ENCODE measurements at regions of chr18 and their contacts with region 1.

Region 1: DNA sequence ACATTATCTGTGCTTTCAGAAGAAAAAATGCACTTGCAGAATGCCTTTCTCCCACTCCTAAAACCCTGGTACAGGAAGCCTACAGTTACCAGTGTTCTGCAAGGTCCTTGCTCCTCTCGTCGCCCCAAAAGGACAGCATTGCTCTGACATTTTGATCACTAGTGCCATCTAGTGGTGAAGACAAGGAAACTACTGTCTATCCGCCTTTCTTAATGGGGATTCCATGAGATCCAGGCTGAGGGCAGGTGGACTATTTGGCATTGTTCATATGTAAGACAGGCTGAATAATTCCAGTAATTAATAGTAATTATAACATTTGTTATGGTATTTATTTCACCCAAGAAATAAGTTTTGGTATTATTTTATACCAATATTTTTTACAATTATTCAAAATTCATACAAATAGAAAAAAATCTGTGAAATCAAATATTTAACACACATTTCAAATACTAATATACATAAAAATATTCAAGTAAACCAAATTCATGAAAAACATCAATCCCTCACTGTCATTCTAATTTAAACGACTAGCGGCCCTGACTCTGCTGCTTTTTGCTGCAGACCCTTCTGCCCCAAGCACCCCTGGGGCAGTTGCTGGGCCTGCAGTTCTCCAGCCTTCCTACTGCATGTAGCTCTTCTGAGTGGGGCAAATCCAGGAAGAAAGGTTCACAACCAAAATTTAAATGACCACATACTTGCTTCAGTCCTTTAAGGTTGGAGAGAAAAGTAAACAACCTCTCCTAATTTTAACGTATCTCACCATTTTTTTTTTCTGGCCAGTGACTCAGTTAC is 19.0 kb downstream of the TPGS2 start:
- DNase-seq: no peak
- H3K4me3 ChIP-seq: no peak overlapping the region
- H3K27me3 ChIP-seq: no peaks in the 10 kb centered on the region
- CTCF ChIP-seq: peak; percentile 81

Region 2: DNA sequence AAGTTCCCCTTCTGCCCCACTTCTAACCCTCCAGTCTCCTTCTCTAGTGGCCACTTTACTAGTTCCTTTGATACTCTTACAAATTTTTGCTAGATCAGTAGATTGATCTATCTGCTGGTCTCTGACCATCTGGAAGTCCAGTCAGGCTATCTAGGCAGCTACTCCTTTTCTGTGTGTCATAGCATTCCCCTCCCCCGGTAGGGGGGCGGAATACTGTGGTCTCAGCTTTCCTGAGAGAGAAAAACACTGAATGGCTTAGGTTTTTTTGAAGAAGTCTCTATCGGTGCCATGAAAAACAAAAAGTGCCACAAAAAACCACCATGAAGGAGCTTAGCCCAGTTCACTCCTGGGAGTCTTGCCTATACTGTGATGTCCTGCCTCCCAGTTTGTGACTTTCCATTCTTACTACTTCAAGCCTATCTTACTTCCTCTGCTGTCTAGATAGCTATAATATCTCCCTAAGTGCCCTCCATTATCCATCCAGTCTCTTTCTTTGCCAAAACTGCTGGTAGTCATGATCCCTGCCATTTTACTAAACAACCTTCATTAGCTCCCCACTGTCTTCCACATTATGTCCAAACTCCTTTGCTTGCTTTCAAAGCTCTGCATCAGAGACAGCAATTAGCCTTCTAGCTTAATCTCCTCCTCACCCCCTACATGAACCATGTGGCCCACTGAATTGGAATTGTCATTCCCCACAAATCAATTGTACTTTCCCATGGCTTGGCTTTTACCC is 10.9 kb before region 1 on chr18:
- CTCF ChIA-PET with region 1: interaction called, 10 read pairs
- POLR2A ChIA-PET with region 1: no interaction called
- DNase-seq: no peak
- H3K4me3 ChIP-seq: no peak overlapping the region
- H3K27me3 ChIP-seq: no peaks in the 10 kb centered on the region
- CTCF ChIP-seq: no peak